ENCODE measurements at regions of chr7 and their contacts with region 1.

Region 1: DNA sequence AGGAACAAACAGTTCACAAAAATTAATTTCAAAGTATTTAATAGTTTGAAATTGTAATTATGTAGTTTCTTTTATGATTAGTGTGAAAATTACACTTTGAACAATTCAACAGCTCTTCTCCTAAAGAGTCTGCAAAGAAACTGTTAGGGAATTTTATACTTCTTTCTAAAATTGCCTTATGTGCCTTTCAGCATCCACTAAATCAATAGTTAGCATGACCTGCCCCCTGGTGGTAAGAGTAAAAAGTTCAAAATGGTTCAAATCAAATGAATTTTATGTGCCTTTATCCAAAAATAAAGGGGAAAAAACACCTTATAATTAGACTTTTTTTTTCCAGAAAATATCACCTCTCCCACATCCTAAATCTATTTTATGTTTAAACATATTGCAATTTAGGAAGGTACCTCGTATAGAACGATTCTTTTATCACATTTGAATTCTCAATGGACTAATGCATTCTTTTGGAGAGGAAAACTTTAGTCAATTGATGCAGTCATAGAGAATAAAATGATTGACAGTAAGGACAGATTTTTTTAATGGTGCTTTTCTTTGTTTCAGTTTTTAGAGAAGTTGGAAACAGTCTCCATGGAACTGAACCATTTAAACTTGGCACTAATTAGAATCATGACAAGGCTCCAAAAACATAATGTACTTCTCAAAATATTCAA is 163.7 kb downstream of the SEMA3D start:
- DNase-seq: peak in 1 of 2 donors; percentile 4
- H3K4me3 ChIP-seq: no peak overlapping the region
- H3K27ac ChIP-seq: no peak overlapping the region
- H3K4me1 ChIP-seq: peaks cover 10 to 12% of the 10 kb centered on the region in 2 donors
- H3K27me3 ChIP-seq: no peaks in the 10 kb centered on the region
- CTCF ChIP-seq: peak; percentile 41 to 72 (median 63)
- POLR2A ChIP-seq: no peak

Region 2: GRCh38 chr7:83936056-83936708 is 1087.0 kb before region 1 on chr7:
- intact Hi-C with region 1: loop called (anchors 10 kb)
- DNase-seq: peak; percentile 39 to 64
- H3K4me3 ChIP-seq: no peak overlapping the region
- H3K27ac ChIP-seq: no peak overlapping the region
- H3K4me1 ChIP-seq: no peaks in the 10 kb centered on the region
- H3K27me3 ChIP-seq: no peaks in the 10 kb centered on the region
- CTCF ChIP-seq: peak in 5 of 6 experiments; percentile 43 to 86 (median 59)
- POLR2A ChIP-seq: no peak

Region 3: DNA sequence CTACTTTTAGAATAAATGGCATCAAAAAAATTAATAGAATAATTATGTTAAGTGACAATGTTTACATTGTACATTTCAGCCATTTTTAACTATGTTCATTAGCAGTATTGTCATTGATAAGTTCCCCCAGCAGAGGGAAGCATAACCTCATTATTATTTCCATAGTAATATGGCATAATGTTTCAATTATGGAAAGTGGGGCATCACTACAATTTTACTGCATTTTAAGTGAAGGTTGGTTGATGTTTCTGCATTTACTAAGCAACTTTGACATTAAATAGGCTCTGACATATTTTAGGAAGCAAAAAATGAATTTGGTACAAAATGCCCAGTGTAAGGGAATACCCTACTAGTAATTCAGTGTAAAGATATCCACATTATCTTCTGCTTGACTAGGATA is 1046.9 kb before region 1 on chr7:
- intact Hi-C with region 1: loop called (anchors 5 kb)
- DNase-seq: no peak
- H3K4me3 ChIP-seq: no peak overlapping the region
- H3K27ac ChIP-seq: no peak overlapping the region
- H3K4me1 ChIP-seq: no peaks in the 10 kb centered on the region
- H3K27me3 ChIP-seq: no peaks in the 10 kb centered on the region
- CTCF ChIP-seq: peak in 5 of 6 experiments; percentile 23 to 67 (median 66)
- POLR2A ChIP-seq: no peak

Region 4: DNA sequence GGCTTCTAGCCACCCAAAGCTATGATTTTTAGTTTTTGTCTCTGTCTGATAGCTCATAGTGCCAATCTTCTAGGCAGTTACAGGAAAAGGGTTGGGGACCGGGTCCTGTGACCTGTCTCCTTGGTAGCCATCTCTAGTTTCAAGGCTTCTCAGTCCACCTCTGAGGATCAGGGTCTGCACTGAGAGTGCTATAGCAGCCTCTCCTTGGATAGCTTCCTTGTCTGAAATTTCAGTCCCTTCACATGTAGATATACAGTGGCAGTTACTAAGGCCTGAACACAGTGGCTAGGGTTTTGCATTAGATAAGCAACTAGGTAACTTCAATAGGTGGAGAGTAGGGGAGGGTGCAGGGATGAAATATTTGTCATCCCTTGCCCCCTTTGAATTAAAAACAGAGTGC is 157.6 kb before region 1 on chr7:
- intact Hi-C with region 1: no loop called
- DNase-seq: no peak
- H3K4me3 ChIP-seq: no peak overlapping the region
- H3K27ac ChIP-seq: no peak overlapping the region
- H3K4me1 ChIP-seq: no peaks in the 10 kb centered on the region
- H3K27me3 ChIP-seq: no peaks in the 10 kb centered on the region
- CTCF ChIP-seq: no peak
- POLR2A ChIP-seq: no peak

Region 5: DNA sequence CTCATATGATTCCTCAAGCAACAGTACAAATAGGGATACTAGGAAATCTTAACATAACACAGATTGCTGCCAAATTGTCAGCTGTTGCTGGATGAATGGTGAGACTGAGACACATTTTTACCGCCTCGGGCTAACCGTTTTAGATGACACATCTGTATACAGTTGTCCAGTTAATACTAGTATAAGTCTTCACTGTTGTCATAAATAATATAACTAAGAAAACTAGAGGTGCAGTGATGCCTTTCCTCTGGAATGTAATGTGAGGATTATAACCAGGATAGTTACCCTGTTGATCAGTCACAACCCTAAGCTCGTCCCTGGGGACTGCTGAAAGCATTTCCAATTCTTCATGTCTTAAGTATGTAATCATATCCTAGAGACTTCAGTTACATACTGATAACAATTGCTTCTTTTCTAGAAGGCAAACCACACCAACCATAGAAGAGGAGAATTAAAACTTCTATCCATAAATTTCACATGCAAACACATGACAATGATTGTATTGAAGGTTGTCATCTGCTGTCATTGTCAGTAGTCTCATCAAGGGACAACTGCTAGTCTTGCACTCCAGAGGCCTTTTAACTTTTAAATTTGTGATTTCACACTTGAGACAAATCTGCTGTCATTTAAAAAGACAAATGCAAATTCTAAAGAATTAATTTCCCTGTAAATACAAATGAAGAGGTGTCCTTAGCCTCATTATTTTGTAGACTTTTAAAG is 264.1 kb after region 1 on chr7:
- intact Hi-C with region 1: no loop called
- DNase-seq: no peak
- H3K4me3 ChIP-seq: no peak overlapping the region
- H3K27ac ChIP-seq: peak overlapping the region in 1 of 3 donors; percentile 33
- H3K4me1 ChIP-seq: peaks cover 6 to 10% of the 10 kb centered on the region in 2 donors
- H3K27me3 ChIP-seq: no peaks in the 10 kb centered on the region
- CTCF ChIP-seq: no peak
- POLR2A ChIP-seq: no peak